Tibial artery (tissue), 4 donors: ENCODE measurements at regions of chr3 and their contacts with region 1.

Region 1: DNA sequence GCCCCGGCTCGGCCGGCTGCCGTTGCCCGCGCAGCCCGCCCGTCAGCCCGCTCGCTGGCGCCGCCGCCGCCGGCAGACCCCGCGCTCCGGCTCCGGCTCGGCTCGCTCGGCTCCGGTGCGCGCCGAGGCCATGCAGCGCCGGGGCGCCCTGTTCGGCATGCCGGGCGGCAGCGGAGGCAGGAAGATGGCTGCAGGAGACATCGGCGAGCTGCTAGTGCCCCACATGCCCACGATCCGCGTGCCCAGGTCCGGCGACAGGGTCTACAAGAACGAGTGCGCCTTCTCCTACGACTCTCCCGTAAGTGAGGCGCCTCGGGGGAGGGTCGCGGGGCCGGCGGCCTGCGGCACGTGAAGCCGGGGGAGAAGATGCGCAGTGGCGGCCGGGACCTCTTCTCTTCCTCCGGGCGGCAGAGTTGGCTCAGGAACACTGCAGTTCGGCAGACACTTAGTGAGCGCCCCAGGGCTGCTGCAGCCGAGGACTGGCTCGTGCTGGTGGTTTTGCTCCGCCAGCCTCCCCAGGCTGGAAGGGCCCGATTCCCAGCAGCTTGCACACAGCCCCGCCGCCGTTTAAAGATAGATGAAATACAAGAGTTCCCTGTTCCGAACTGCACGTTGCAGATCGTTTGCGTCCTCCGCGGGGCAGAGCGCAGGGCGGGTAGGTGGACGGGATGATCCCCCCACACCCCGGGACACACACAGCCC is 407 bp downstream of the USP13 start:
- DNase-seq: peak; percentile 71 to 84
- H3K4me3 ChIP-seq: peak overlapping the region; percentile 85 to 93
- H3K27ac ChIP-seq: peak overlapping the region; percentile 92 to 96
- H3K4me1 ChIP-seq: peaks cover 0 to 11% (median 5%) of the 10 kb centered on the region in 4 donors
- H3K27me3 ChIP-seq: no peaks in the 10 kb centered on the region
- CTCF ChIP-seq: no peak

Region 2: DNA sequence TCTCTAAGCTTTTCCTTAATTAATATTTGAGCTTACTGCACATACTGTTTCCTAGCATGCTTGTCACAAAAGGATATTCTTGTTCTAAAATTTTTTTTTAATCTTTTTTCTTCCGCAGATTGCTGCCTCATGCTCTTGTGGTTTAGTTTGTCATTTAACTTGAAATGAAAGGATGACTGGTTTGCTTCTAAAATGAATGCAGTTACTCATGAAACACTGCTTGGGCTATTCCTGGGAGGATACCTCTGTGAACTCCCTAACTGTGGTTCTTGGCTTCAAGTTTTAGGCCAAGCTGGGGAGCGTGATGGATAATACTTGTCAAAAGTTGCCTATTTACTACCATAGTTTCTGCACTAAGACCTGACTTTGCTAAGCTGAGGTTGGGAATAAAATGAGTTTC is 63.6 kb after region 1 on chr3:
- intact Hi-C with region 1: loop called (anchors 5 kb)
- DNase-seq: no peak
- H3K4me3 ChIP-seq: no peak overlapping the region
- H3K27ac ChIP-seq: peak overlapping the region; percentile 16 to 56
- H3K4me1 ChIP-seq: peaks cover 0 to 38% (median 3%) of the 10 kb centered on the region in 4 donors
- H3K27me3 ChIP-seq: no peaks in the 10 kb centered on the region
- CTCF ChIP-seq: no peak

Region 3: DNA sequence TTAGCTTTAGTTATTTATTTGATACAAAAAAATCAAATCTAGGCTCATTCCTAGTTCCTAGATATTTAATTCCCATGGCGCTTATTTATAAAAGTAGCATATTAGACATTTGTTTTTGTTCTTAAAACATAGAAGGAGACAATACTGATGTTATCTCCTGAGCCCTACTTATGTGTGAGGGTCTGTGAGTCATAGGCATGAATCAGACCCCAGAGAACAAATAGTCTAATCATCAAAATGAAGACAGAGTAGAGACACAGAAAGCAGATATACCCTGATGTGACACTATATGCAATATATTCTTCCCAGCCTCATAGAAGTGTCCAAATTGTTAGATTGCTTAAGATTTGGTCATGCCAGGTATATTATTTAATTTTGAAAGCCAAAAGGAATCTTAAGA is 338.6 kb after region 1 on chr3:
- intact Hi-C with region 1: no loop called
- DNase-seq: no peak
- H3K4me3 ChIP-seq: no peak overlapping the region
- H3K27ac ChIP-seq: no peak overlapping the region
- H3K4me1 ChIP-seq: no peaks in the 10 kb centered on the region
- H3K27me3 ChIP-seq: no peaks in the 10 kb centered on the region
- CTCF ChIP-seq: no peak